Psoas muscle (tissue), 8 donors: ENCODE measurements at regions of chr12 and their contacts with region 1.

Region 1: GRCh38 chr12:80269803-80270552 is 170.6 kb downstream of the OTOGL start:
- DNase-seq: no peak
- ATAC-seq: peak in 3 of 4 donors; percentile 64 to 81 (median 66)
- H3K4me3 ChIP-seq: no peak overlapping the region
- H3K27ac ChIP-seq: no peak overlapping the region
- H3K4me1 ChIP-seq: no peaks in the 10 kb centered on the region
- H3K27me3 ChIP-seq: no peaks in the 10 kb centered on the region
- CTCF ChIP-seq: peak; percentile 69

Region 2: GRCh38 chr12:79634957-79635471 is 635.0 kb before region 1 on chr12:
- intact Hi-C with region 1: no loop called
- DNase-seq: no peak
- ATAC-seq: no peak
- H3K4me3 ChIP-seq: no peak overlapping the region
- H3K27ac ChIP-seq: no peak overlapping the region
- H3K4me1 ChIP-seq: no peaks in the 10 kb centered on the region
- H3K27me3 ChIP-seq: no peaks in the 10 kb centered on the region
- CTCF ChIP-seq: no peak

Region 3: DNA sequence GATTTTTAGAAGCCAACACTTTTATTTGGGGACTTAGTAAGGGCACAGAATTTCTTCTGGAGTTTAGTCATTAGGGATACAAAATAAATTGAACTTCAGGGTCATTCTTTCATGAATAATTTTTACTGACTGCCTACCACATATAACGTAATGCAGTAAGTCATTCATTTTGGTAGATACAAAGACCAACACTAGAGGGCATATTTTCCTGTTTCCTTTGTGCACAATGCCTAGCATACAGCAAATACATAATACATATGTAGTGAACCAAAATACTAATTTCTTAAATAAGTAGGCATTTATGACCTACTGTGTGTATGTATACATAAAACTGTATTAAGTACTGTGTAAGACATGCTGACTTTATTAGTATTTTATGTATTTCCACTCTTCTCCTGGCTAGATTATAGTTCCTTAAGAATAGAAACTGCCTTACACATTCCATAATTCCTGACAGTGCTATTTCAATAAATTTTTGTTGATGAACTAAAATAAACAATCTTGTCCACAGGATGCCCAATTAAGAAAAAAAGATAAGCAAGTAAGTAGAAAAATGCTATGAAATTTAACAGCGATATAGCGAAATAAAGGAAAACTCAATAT is 383.0 kb before region 1 on chr12:
- intact Hi-C with region 1: loop called in 1 of 2 experiments (anchors 5 kb)
- DNase-seq: no peak
- ATAC-seq: peak in 3 of 4 donors; percentile 42 to 82 (median 68)
- H3K4me3 ChIP-seq: no peak overlapping the region
- H3K27ac ChIP-seq: no peak overlapping the region
- H3K4me1 ChIP-seq: peaks cover 62% of the 10 kb centered on the region
- H3K27me3 ChIP-seq: no peaks in the 10 kb centered on the region
- CTCF ChIP-seq: peak; percentile 56

Region 4: DNA sequence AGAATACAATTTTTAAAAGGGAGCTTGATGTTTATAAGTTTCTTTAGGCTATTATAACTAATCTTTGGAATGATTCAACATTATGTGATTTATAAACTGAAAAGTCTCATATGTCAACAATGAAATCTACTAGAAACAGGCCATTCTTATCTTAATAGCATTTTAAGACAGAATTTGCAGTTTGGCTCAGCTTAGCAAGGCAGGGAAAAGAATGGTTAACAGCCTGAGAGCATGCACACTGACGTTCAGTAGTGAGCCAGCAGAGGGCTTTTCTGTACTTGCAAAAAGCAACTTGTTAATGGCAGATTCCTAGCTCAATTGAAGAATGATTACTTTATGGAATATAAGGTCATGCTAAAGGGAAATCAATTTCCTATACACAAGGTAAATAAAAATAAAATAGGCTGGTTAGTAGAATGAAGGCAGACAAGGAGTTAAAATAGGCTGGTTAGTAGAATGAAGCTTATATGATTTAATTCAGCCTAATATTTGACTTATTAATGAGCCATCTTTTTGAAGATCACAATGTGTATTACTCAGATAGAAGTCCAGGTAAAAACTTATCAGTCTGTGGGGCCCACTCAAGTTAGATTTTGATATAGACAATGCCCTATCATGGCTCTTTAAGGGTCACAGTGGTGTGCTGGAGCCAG is 74.8 kb before region 1 on chr12:
- intact Hi-C with region 1: loop called in 1 of 2 experiments (anchors 2 kb)
- DNase-seq: no peak
- ATAC-seq: peak in 1 of 4 donors; percentile 38
- H3K4me3 ChIP-seq: no peak overlapping the region
- H3K27ac ChIP-seq: no peak overlapping the region
- H3K4me1 ChIP-seq: peaks cover 5% of the 10 kb centered on the region
- H3K27me3 ChIP-seq: no peaks in the 10 kb centered on the region
- CTCF ChIP-seq: peak; percentile 54

Region 5: GRCh38 chr12:80412369-80412953 is 142.5 kb after region 1 on chr12:
- intact Hi-C with region 1: no loop called
- DNase-seq: no peak
- ATAC-seq: peak; percentile 48 to 89 (median 73)
- H3K4me3 ChIP-seq: no peak overlapping the region
- H3K27ac ChIP-seq: no peak overlapping the region
- H3K4me1 ChIP-seq: no peaks in the 10 kb centered on the region
- H3K27me3 ChIP-seq: no peaks in the 10 kb centered on the region
- CTCF ChIP-seq: peak; percentile 85